CD4-positive, alpha-beta T cell (primary cell): ENCODE measurements at regions of chr9 and their contacts with region 1.

Region 1: GRCh38 chr9:34035656-34036055 is 13.0 kb downstream of the UBAP2 start:
- DNase-seq: no peak
- ATAC-seq: no peak
- H3K4me3 ChIP-seq: no peak overlapping the region
- H3K4me3 Mint-ChIP-seq: no peak overlapping the region
- H3K27ac ChIP-seq: no peak overlapping the region
- H3K27ac Mint-ChIP-seq: no peak overlapping the region
- H3K4me1 ChIP-seq: no peaks in the 10 kb centered on the region
- H3K4me1 Mint-ChIP-seq: peaks cover 25% of the 10 kb centered on the region
- H3K27me3 ChIP-seq: no peaks in the 10 kb centered on the region
- H3K27me3 Mint-ChIP-seq: no peaks in the 10 kb centered on the region
- CTCF ChIP-seq: no peak

Region 2: GRCh38 chr9:34001298-34001697 is 34.4 kb before region 1 on chr9:
- CTCF ChIA-PET with region 1: no interaction called
- POLR2A ChIA-PET with region 1: no interaction called
- intact Hi-C with region 1: loop called in 1 of 2 experiments (anchors 5 kb)
- DNase-seq: no peak
- ATAC-seq: no peak
- H3K4me3 ChIP-seq: no peak overlapping the region
- H3K4me3 Mint-ChIP-seq: no peak overlapping the region
- H3K27ac ChIP-seq: no peak overlapping the region
- H3K27ac Mint-ChIP-seq: no peak overlapping the region
- H3K4me1 ChIP-seq: no peaks in the 10 kb centered on the region
- H3K4me1 Mint-ChIP-seq: no peaks in the 10 kb centered on the region
- H3K27me3 ChIP-seq: no peaks in the 10 kb centered on the region
- H3K27me3 Mint-ChIP-seq: no peaks in the 10 kb centered on the region
- CTCF ChIP-seq: no peak